ENCODE measurements at regions of chr18 and their contacts with region 1.

Region 1: GRCh38 chr18:48913201-48913600 is 37.6 kb downstream of the SMAD7 start:
- DNase-seq: peak in 1 of 5 donors; percentile 39
- H3K4me3 ChIP-seq: no peak overlapping the region
- H3K27ac ChIP-seq: no peak overlapping the region
- H3K4me1 ChIP-seq: peaks cover 0 to 9% (median 9%) of the 10 kb centered on the region in 3 donors
- H3K27me3 ChIP-seq: no peaks in the 10 kb centered on the region
- CTCF ChIP-seq: no peak

Region 2: DNA sequence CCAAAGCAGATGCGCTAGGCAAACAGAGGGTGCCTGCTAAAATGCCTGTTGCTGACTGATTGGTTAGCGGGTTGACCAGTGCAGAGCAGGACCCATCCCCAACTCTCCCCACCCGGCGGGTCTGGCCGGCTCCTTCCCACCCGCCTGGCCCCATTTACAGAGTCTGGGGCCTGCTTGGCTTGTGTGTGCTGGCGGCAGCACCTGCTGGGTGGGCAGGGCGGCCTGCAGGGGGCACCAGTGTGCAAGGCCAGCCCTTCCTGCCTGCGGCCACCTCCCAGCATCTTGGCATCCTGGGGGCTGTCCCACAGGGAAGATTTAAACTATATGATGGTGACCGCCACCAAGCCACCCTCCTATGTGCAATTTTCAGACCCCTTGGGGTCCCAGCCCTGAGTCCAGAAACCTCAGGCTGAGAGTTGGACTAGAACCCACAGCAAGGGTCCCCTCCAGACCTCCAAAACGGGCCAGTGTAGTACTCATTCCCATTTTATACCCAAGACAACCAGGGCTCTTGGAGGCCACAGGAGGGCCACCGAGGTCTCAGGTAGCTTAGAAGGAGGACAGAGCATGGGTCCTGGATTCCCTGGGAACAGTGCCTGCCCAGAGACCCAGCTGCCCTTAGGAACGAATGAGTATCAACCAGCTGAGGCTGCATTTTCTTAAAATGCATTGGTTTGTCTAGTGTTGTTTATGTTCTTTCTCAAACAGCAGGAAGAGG is 136.0 kb before region 1 on chr18:
- intact Hi-C with region 1: loop called (anchors 10 kb)
- DNase-seq: peak; percentile 75 to 86 (median 83)
- H3K4me3 ChIP-seq: no peak overlapping the region
- H3K27ac ChIP-seq: no peak overlapping the region
- H3K4me1 ChIP-seq: peaks cover 12 to 37% (median 30%) of the 10 kb centered on the region in 3 donors
- H3K27me3 ChIP-seq: no peaks in the 10 kb centered on the region
- CTCF ChIP-seq: peak; percentile 89

Region 3: GRCh38 chr18:48992699-48993555 is 79.7 kb after region 1 on chr18:
- intact Hi-C with region 1: no loop called
- DNase-seq: peak in 3 of 5 donors; percentile 26 to 59 (median 52)
- H3K4me3 ChIP-seq: no peak overlapping the region
- H3K27ac ChIP-seq: no peak overlapping the region
- H3K4me1 ChIP-seq: peaks cover 0 to 2% (median 2%) of the 10 kb centered on the region in 3 donors
- H3K27me3 ChIP-seq: no peaks in the 10 kb centered on the region
- CTCF ChIP-seq: no peak

Measured in kidney (tissue), 22 donors.